ENCODE measurements at regions of chr13 and their contacts with region 1.

Region 1: DNA sequence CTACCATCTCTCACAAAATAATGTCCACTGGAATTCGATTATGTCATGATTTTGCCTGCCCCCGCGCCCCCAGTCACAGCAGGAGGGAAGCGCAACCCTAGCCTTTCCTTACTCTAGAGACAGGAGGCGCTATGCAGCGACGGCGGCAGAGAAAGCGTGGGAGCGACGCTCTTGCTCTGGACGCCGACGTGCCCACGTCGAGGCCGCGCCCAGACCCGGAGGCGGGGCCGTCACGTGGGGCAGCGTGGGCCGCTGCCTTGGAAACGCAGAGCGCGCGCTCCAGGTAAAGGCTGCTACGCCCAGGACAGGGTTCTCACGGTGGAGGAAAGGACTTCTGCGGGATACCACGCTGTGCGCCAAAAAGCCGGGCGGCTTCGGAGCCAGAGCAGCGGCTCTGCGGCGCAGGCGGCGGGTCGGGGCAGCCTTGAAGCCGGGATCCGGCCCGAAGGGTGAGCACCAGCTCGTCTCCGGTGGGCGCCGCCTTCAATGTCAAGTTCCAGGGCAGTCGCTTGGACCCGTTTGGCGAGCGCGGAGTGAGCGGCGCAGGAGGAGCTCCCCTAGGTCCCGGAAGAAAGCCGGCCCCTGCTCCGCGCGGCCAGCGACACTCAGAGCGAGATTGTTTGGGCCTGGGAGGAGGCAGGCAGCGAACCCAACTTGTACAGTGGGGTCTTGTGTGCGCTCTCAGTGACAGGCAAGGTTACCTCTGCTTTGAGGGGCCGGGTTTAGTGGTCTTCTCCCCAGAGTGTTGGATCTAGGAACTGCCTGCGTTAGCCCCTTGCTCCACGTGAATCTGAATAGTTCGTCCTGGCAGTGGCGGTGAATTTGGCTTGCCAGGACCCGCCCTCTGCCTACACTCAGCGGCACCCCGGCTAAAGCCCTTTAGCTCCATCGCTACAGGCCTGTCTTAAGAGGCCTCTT is 121.7 kb downstream of the MRPL57 start:
- DNase-seq: peak; percentile 78 to 81
- H3K4me3 ChIP-seq: peak overlapping the region; percentile 70
- H3K27ac ChIP-seq: peak overlapping the region; percentile 69
- H3K4me1 ChIP-seq: peaks cover 18% of the 10 kb centered on the region
- H3K27me3 ChIP-seq: no peaks in the 10 kb centered on the region
- CTCF ChIP-seq: peak; percentile 81

Region 2: GRCh38 chr13:20703780-20704445 is 594.3 kb before region 1 on chr13:
- CTCF ChIA-PET with region 1: no interaction called
- POLR2A ChIA-PET with region 1: no interaction called
- intact Hi-C with region 1: loop called (anchors 5 kb)
- DNase-seq: peak; percentile 66 to 87
- H3K4me3 ChIP-seq: no peak overlapping the region; the same call in 1 of the 2 replicates
- H3K27ac ChIP-seq: no peak overlapping the region
- H3K4me1 ChIP-seq: peaks cover 14% of the 10 kb centered on the region
- H3K27me3 ChIP-seq: no peaks in the 10 kb centered on the region
- CTCF ChIP-seq: no peak; the same call in 1 of the 2 replicates

Region 3: GRCh38 chr13:20953245-20953931 is 344.8 kb before region 1 on chr13:
- CTCF ChIA-PET with region 1: interaction called, 10 read pairs
- POLR2A ChIA-PET with region 1: no interaction called
- intact Hi-C with region 1: no loop called
- DNase-seq: no peak
- H3K4me3 ChIP-seq: no peak overlapping the region
- H3K27ac ChIP-seq: no peak overlapping the region
- H3K4me1 ChIP-seq: no peaks in the 10 kb centered on the region
- H3K27me3 ChIP-seq: no peaks in the 10 kb centered on the region
- CTCF ChIP-seq: no peak

Region 4: GRCh38 chr13:21476893-21477472 is 178.8 kb after region 1 on chr13:
- CTCF ChIA-PET with region 1: interaction called, 8 read pairs
- POLR2A ChIA-PET with region 1: no interaction called
- intact Hi-C with region 1: loop called (anchors 1 kb)
- DNase-seq: peak; percentile 64 to 69
- H3K4me3 ChIP-seq: no peak overlapping the region
- H3K27ac ChIP-seq: no peak overlapping the region
- H3K4me1 ChIP-seq: peaks cover 29% of the 10 kb centered on the region
- H3K27me3 ChIP-seq: no peaks in the 10 kb centered on the region
- CTCF ChIP-seq: peak; percentile 91

Measured in PC-9 (cell line).